ENCODE measurements at regions of chr15 and their contacts with region 1.

Region 1: DNA sequence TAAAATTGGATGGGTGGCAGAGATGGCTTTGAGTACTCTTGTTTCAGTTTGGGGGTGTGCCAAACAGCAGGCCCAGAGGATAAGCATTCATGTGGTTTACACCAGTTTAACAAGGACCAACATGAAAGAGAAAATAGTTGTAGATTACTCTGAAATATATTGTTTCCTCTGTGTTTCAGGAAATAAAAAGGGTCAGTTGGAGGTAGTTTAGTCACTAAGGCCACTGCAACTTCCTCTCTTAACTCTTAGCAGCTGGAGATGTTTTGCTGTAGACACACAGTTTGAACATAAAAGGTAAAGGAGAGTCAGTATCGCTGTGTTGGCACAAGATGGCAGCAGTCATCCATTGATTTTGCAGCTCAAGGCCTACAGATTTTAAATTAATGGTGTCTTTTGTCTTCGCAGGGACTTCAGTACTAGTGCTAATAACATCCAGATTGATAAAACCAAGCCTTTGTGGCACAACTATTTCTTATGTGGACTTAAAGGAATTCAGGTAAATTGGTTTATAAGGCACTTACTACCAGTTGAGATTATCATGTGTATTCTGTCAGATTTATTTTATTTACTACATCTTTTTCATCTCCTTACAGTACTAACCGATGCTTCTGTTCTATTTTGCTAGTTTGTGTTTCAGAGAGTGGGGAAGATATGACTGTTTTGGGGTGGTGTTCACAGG is 65.5 kb downstream of the GALK2 start:
- DNase-seq: peak in 7 of 10 donors; percentile 26 to 91 (median 62)

Region 2: GRCh38 chr15:49110158-49110944 is 125.2 kb before region 1 on chr15:
- intact Hi-C with region 1: no loop called
- DNase-seq: no peak

Region 3: DNA sequence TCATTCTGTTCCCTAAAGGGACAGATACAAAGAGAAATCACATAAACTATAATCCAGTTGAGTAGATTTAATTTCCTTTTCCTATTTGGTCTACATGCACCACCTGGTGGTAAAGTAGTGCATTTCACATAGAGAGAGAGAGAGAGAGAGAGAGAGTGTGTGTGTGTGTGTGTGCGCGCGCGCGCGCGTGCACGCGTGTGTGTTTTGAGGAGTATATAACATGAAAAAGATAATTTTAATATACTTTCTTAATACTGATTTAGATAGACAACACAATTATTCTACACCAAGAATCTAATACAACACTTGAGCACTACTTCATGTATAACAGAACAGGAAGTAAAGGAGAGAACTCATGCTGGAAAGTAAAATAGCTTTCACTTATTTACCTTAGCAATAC is 186.4 kb after region 1 on chr15:
- intact Hi-C with region 1: loop called (anchors 2 kb)
- DNase-seq: peak in 4 of 10 donors; percentile 3 to 57 (median 16)

Region 4: GRCh38 chr15:50003786-50004334 is 768.3 kb after region 1 on chr15:
- intact Hi-C with region 1: loop called (anchors 5 kb)
- DNase-seq: peak; percentile 63 to 97 (median 84)

Region 5: DNA sequence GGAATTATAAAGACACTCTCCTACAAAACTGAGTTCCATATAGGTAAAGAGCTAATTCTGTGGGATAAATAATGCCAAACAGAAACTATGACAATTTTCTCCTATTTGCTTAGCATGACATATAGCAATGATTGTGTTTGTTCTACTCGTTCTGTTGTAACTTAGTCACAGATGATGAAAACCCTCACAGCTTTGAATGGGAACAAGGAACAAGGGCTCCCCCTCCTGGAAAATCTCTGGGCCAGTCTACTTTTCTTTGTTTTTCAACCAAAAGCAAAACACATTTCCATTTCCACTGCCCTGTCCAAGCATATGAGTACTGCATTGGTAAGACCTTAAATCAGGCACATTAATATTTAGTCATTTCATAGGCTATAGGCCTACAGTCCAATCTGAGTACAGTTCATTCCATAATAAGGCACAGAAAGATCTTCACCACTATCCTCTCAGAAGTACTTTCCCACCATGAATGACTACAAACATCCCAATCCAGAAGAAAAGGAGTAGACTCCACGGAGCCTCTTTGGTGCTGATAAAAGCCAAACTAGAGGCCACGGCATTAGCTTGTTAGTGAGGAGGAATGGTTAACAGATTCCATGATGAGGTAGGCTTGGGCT is 816.3 kb after region 1 on chr15:
- intact Hi-C with region 1: loop called (anchors 2 kb)
- DNase-seq: peak in 7 of 10 donors; percentile 14 to 79 (median 52)

Region 6: GRCh38 chr15:50145451-50145872 is 909.9 kb after region 1 on chr15:
- intact Hi-C with region 1: loop called (anchors 2 kb)
- DNase-seq: no peak